ENCODE measurements at regions of chr17 and their contacts with region 1.

Region 1: DNA sequence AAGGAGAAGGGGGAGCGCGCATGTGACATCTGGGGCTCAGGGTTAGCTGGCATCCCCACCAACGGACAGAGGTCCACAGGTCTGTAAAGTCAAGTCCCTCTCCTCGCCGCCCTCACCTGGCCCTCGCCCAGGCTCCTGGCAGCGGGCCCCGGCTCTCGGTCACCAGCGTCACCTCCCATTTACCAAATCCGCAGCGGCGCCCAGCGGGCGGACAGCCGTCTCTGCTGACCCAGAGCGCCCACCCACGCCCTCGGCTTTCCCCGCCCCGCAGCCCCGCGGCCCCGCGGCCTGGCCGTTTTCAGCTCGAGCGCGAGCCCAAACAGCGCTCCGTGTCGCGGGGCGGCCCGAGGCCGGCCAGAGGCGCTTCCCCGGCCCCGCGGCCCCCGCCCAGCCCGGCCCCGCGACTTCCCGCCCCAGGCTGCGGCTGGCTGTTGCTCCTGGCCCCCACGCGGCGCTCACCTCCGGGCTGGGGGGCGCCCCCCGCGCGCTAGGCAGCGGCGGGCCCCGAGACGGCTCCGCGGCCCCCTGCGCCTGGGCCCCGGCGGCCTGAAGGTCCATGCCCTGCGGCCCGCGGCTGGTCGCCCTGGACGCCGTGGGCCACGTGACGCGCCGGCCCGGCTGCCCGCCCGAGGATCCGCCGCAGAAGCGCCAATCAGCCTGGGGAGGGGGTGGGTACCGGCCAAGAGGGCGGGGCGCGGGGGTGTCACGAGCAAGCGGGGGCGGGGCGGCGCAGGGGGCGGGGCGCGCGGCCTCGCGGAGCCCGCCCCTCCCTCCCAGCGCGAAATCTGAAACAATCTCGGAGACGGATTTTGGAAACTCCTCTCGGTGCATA is at the start of gene COPRS:
- DNase-seq: peak; percentile 70
- H3K4me3 ChIP-seq: peak within 1 kb of the TSS; percentile 69 to 81 (median 73)
- H3K27ac ChIP-seq: peak within 1 kb of the TSS; percentile 42
- H3K4me1 ChIP-seq: peaks cover 20% of the 10 kb centered on the region
- H3K27me3 ChIP-seq: no peaks in the 10 kb centered on the region
- CTCF ChIP-seq: no peak
- total RNA-seq, gene COPRS: 39.8 to 41.9 TPM

Region 2: GRCh38 chr17:31533546-31534155 is 325.2 kb before region 1 on chr17:
- CTCF ChIA-PET with region 1: no interaction called
- dilution Hi-C with region 1: loop called (anchors 5 kb)
- in situ Hi-C with region 1: no loop called
- intact Hi-C with region 1: no loop called
- DNase-seq: peak; percentile 69
- H3K4me3 ChIP-seq: no peak overlapping the region
- H3K27ac ChIP-seq: no peak overlapping the region
- H3K4me1 ChIP-seq: peaks cover 11% of the 10 kb centered on the region
- H3K27me3 ChIP-seq: no peaks in the 10 kb centered on the region
- CTCF ChIP-seq: peak; percentile 4 to 19

Region 3: GRCh38 chr17:31787857-31788570 is 70.8 kb before region 1 on chr17:
- CTCF ChIA-PET with region 1: no interaction called
- dilution Hi-C with region 1: loop called (anchors 5 kb)
- in situ Hi-C with region 1: no loop called
- intact Hi-C with region 1: no loop called
- DNase-seq: peak; percentile 98
- H3K4me3 ChIP-seq: no peak overlapping the region
- H3K27ac ChIP-seq: peak overlapping the region; percentile 86
- H3K4me1 ChIP-seq: peaks cover 19% of the 10 kb centered on the region
- H3K27me3 ChIP-seq: no peaks in the 10 kb centered on the region
- CTCF ChIP-seq: no peak

Region 4: DNA sequence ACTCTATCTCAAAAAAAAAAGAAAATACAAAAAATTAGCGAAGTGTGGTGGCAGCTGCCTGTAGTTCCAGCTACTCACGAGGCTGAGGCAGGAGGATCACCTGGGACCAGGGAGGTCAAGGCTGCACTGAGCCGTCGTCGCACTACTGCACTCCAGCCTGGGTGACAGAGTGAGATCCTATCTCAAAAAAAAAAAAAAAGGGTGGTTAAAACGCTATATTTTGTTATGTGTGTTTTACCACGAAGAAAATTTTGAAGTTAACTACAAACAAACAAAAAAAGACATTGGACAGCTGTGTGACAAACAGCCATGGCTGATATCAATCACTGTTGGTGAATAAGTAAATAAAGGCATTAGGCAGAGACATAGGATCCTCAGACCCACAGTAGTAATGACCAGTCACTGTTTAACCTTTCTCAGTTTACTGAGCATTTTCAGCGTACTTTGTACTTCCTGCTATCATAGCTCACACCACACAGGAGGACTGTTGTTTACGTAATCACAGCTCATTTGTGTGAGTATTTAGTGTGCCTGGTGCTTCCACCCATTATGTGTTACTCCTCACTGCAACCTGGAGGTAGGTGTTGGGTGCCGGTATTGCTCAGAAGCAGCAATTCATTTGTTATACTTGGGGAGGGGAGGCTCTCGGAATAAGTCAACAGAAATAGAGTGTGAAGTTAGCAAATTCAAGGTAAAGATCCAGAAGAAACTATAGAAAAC is 55.2 kb before region 1 on chr17:
- CTCF ChIA-PET with region 1: no interaction called
- dilution Hi-C with region 1: no loop called
- in situ Hi-C with region 1: no loop called
- intact Hi-C with region 1: no loop called
- DNase-seq: no peak
- H3K4me3 ChIP-seq: no peak overlapping the region
- H3K27ac ChIP-seq: no peak overlapping the region
- H3K4me1 ChIP-seq: no peaks in the 10 kb centered on the region
- H3K27me3 ChIP-seq: no peaks in the 10 kb centered on the region
- CTCF ChIP-seq: no peak

Region 5: GRCh38 chr17:31815212-31815730 is 43.6 kb before region 1 on chr17:
- CTCF ChIA-PET with region 1: no interaction called
- dilution Hi-C with region 1: loop called (anchors 5 kb)
- in situ Hi-C with region 1: no loop called
- intact Hi-C with region 1: no loop called
- DNase-seq: no peak
- H3K4me3 ChIP-seq: no peak overlapping the region
- H3K27ac ChIP-seq: no peak overlapping the region
- H3K4me1 ChIP-seq: no peaks in the 10 kb centered on the region
- H3K27me3 ChIP-seq: no peaks in the 10 kb centered on the region
- CTCF ChIP-seq: no peak